ENCODE measurements at regions of chr6 and their contacts with region 1.

Region 1: GRCh38 chr6:32853541-32854375 is at the starts of genes PSMB9 and TAP1:
- DNase-seq: peak; percentile 97 to 98
- ATAC-seq: peak; percentile 98
- H3K4me3 ChIP-seq: peak within 1 kb of the TSS; percentile 54 to 97
- H3K27ac ChIP-seq: peak within 1 kb of the TSS; percentile 58 to 89
- H3K4me1 ChIP-seq: no peaks in the 10 kb centered on the region
- H3K27me3 ChIP-seq: no peaks in the 10 kb centered on the region
- total RNA-seq, gene PSMB9: 24.9 to 42.8 TPM
- total RNA-seq, gene TAP1: 39.4 to 42.1 TPM

Region 2: DNA sequence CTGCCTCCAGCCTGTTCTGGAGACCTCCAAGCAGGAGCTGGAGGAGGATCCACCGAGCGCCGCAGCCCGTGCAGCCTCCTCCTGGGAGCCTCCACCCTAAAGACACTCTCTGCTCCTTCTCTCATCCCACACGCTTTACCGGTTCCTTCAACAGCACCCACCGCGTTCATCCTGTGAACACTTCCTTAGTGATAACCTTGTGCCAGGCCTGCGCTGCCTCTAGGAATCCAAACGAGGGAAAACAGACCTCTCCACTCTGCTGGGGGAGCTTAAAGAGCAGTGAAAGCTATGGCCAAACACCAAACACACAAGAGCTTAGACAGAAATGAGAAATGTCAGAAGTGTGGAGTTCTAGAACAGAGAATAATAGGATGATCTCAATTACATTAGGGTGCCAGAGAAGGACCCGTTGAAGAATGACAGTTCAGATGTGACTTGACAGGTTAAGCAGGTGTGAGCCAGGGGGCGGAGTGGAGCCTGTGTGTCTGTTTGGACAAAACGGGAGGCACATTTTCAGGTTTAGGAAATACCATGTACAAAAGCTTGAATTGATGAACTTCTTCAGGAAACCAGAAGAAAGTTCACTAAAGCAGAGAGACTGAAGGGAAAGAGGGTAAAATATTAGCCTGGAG is 295.2 kb before region 1 on chr6:
- intact Hi-C with region 1: no loop called
- DNase-seq: no peak
- ATAC-seq: no peak
- H3K4me3 ChIP-seq: no peak overlapping the region
- H3K27ac ChIP-seq: no peak overlapping the region
- H3K4me1 ChIP-seq: no peaks in the 10 kb centered on the region
- H3K27me3 ChIP-seq: no peaks in the 10 kb centered on the region

Region 3: GRCh38 chr6:32838114-32838958 is 15.4 kb before region 1 on chr6 and contains the start of gene TAP2:
- intact Hi-C with region 1: loop called (anchors 1 to 2 kb)
- DNase-seq: peak; percentile 98 to 99
- ATAC-seq: peak; percentile 98
- H3K4me3 ChIP-seq: peak within 1 kb of the TSS; percentile 52 to 83
- H3K27ac ChIP-seq: peak within 1 kb of the TSS in 1 of 2 donors; percentile 58
- H3K4me1 ChIP-seq: no peaks in the 10 kb centered on the region
- H3K27me3 ChIP-seq: no peaks in the 10 kb centered on the region
- total RNA-seq, gene TAP2: 26.5 to 48.1 TPM